Heart right ventricle (tissue), 16 donors: ENCODE measurements at regions of chr3 and their contacts with region 1.

Region 1: DNA sequence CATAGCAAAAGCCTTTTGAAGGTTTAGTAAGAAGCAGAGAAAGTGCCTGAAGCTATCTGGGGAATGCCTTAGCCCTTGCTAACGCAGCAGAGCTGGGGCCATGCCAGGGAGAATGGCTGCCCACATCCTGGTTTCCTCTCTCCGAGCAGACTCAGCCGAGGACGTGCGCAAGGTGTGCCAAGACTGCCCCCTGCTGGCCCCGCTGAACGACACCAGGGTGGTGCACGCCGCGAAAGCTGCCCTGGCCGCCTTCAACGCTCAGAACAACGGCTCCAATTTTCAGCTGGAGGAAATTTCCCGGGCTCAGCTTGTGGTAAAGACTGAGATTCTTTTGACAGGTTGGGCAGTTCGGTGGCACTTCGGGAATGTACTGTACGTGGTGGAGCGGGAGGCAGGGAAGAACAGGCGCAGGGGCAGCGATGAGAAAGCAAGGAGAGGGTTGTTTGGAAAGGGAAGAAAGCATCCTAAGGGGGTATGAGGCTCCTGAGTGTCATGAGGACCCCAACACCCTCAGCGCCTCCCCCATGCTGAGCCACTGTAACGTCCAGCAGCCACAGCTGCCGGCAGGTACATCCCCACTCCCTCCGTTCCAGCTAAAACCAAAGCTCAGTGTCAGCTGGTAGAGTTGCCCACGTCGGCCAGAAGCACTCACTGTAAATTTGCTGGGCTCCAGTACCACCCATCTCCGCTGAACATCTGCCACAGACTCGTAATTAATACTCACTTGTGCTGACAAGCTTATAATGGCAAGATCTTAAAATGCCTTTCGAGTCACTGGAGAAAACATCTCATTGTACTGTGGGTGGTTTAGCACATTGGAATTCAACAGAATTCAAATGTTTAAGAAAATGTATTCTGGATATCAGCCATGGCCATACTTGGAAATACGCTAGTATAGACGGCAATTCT is 4.4 kb downstream of the AHSG start:
- DNase-seq: peak; percentile 77 to 82
- ATAC-seq: peak; percentile 93 to 98 (median 96)
- H3K4me3 ChIP-seq: peak overlapping the region in 5 of 10 donors; percentile 18 to 27 (median 19)
- H3K27ac ChIP-seq: no peak overlapping the region
- H3K4me1 ChIP-seq: peaks cover 0 to 11% (median 6%) of the 10 kb centered on the region in 9 donors
- H3K27me3 ChIP-seq: peaks cover 0 to 50% (median 21%) of the 10 kb centered on the region in 7 donors
- CTCF ChIP-seq: peak; percentile 71 to 97 (median 85)

Region 2: DNA sequence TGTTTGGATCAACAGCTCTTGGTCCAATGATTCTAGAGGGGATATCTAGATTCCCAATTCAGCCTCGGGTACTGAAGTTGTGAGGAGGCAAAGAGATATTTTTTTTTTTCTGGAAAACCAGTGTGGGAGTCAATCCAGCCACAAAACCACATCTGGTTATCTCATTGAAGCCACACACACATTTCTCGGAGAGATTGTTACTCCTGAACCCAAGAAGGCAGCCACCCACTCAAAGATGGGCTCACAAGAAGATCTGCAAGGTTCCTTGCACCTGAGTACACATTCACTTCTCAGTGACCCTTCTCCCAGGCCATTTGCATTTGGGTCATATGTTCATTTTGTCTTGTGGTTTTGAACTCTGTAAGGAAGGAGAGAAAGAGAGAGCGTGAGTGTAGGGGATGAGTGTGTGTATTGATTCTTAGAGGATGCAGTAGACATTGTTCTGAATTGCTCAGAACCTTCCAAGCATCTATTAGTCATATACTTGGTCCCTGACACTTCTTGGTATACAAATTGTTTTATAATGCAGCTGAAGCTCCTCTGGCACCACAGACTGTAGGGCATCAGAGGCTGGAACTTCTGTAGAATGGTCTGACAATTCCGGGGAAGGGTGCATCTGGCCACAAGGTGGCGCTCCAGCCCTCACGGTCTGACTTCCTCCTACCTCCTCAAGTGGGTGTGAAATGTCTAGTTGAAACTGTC is 640.2 kb before region 1 on chr3:
- intact Hi-C with region 1: loop called in 2 of 10 experiments (anchors 5 kb)
- DNase-seq: peak; percentile 74 to 82
- ATAC-seq: peak in 6 of 8 donors; percentile 64 to 82 (median 71)
- H3K4me3 ChIP-seq: no peak overlapping the region
- H3K27ac ChIP-seq: no peak overlapping the region
- H3K4me1 ChIP-seq: peaks cover 0 to under 1% (median 0%) of the 10 kb centered on the region in 9 donors
- H3K27me3 ChIP-seq: no peaks in the 10 kb centered on the region
- CTCF ChIP-seq: peak; percentile 63 to 94 (median 88)

Region 3: GRCh38 chr3:185983495-185984141 is 633.7 kb before region 1 on chr3:
- intact Hi-C with region 1: loop called in 2 of 10 experiments (anchors 5 kb)
- DNase-seq: peak; percentile 35 to 76
- ATAC-seq: peak; percentile 84 to 95 (median 94)
- H3K4me3 ChIP-seq: no peak overlapping the region
- H3K27ac ChIP-seq: no peak overlapping the region
- H3K4me1 ChIP-seq: peaks cover 0 to 12% (median 6%) of the 10 kb centered on the region in 9 donors
- H3K27me3 ChIP-seq: peaks cover 0 to 15% (median 6%) of the 10 kb centered on the region in 7 donors
- CTCF ChIP-seq: peak; percentile 84 to 95 (median 93)

Region 4: DNA sequence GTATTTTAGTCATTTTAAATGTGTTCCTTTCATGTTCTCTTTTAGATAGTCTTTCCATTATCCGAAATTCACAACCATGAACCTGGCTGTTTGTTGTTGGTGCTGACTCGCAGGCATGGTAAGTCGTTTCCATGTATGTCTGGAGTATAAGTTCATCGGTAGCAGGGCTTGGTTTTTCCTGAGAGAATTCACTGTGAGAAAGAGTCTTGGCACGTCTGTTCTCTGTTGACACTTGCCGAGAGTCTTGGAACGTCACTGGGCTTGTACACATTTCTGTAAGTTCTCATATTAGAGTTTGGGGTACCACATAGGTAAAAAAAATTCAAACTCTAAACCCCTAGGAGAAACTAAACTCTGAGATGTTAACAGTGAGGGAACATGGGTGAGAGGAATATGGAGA is 136.7 kb after region 1 on chr3:
- intact Hi-C with region 1: loop called (anchors 1 to 10 kb)
- DNase-seq: no peak
- ATAC-seq: no peak
- H3K4me3 ChIP-seq: no peak overlapping the region
- H3K27ac ChIP-seq: no peak overlapping the region
- H3K4me1 ChIP-seq: peaks cover 0 to 8% (median 4%) of the 10 kb centered on the region in 9 donors
- H3K27me3 ChIP-seq: peaks cover 0 to 4% (median 0%) of the 10 kb centered on the region in 7 donors
- CTCF ChIP-seq: no peak

Region 5: DNA sequence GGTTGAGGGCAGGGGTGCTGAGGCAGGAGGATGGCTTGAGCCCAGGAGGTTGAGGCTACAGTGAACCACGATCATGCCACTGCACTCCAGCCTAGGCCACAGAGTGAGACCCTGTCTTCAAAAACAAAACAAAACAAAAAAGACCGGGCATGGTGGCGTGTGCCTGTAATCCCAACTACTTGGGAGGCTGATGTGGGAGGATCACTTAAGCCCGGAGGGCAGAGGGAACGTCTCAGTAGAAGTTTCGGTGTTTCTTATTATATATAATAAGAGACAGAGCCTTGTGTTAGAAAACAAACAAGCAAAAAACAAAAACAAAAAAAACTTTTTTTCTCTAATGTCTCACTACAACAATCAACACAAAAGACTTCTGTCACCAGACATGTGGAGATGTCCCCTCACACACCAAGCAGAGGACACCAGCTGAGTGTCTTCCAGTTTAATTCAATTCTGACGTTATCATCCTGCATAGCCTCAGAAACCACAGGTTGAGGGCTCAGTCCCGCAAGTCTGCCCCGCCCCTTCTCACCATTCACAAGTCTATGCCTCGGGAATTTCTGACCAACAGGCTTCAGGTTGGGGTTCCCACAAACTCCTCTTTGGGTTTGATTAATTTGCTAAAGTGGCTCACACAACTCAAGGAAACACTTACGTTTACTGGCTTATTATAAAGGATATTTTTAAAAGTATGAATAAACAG is 142.1 kb after region 1 on chr3:
- intact Hi-C with region 1: loop called in 5 of 10 experiments (anchors 5 to 10 kb)
- DNase-seq: no peak
- ATAC-seq: no peak
- H3K4me3 ChIP-seq: no peak overlapping the region
- H3K27ac ChIP-seq: no peak overlapping the region
- H3K4me1 ChIP-seq: no peaks in the 10 kb centered on the region
- H3K27me3 ChIP-seq: peaks cover 0 to 4% (median 0%) of the 10 kb centered on the region in 7 donors
- CTCF ChIP-seq: no peak

Region 6: DNA sequence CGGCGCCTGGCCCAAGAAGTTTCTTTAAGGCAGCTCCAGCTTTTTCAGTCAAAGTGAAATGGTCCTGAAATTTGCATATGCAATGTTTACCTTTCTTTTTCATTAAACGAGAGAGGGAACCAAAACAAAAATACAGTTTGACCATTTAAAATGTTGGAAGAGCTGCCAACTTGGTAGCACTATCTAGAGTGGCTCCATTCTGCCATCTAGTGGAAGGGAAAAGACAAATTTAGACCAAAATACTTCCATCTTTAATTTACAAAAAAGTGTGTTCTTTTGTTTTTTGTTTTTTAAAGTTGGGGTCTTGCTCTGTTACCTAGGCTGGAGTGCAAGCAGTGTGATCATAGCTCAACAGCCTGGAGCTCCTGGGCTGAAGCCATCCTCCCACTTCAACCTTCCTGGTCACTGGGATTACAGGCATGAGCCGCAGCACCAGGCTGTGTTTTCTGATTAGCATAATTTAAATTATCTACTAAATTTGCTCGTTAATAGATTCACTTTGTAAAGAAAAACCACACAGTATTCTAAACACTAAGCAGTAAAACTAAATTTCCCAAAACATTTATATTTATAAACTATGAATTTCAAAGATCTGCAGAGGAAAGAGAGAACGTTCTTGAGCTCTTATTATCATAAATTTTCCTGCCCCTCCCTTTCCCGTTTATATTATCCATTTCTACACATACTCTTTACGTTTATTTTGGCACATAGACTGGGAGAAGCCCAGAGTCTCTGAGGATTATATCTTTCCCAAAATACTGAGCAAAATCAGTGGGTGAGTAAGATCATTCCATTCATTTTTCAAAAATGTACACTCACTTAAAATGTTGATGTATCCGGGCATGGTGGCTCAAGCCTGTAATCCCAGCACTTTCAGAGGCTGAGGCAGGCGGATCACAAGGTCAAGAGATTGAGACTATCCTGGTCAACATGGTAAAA is 204.4 kb after region 1 on chr3:
- intact Hi-C with region 1: loop called in 9 of 10 experiments (anchors 2 to 5 kb)
- DNase-seq: no peak
- ATAC-seq: peak in 1 of 8 donors; percentile 49
- H3K4me3 ChIP-seq: no peak overlapping the region
- H3K27ac ChIP-seq: no peak overlapping the region
- H3K4me1 ChIP-seq: peaks cover 0 to 22% (median 5%) of the 10 kb centered on the region in 9 donors
- H3K27me3 ChIP-seq: peaks cover 0 to 33% (median 26%) of the 10 kb centered on the region in 7 donors
- CTCF ChIP-seq: peak; percentile 37 to 77 (median 72)